Heart right ventricle (tissue), 16 donors: ENCODE measurements at regions of chr14 and their contacts with region 1.

Region 1: DNA sequence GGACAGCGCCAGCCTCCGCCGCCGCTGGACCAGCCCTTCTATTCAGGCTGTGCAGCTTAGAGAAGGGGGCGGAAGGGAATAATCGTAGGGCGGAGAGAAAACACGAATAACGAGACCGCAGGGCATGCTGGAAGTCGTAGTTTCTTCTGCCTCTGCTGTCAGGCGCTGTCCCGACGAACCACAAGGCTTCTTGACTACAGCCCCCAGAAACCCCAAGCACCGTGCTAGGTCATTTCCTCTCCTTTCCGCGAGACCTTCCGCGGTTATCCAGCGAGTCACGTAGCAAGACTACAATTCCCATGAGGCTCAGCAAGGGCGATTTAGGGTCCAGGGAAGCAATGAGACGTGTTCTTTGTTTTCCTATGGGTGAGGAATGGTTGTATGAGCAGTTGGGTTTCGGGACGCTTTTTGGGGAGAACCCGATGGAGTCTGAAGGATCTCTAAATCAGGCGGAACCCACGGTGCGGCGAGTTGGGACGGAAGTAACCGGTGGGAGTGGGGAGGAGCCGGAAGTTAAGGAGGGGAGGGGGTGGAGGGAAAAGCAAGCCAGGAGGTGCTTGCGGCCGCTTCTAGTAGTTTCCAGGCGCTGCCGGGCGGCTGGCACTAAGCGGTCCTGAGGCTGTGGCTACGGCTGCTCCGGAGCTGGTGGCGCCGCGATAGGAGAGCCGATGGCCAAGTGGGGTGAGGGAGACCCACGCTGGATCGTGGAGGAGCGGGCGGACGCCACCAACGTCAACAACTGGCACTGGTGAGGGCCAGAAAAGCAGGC is at the starts of genes AHSA1 and VIPAS39:
- DNase-seq: peak; percentile 87 to 98
- ATAC-seq: peak; percentile 98 to 99 (median 99)
- H3K4me3 ChIP-seq: peak within 1 kb of the TSS; percentile 75 to 99 (median 95)
- H3K27ac ChIP-seq: peak within 1 kb of the TSS; percentile 77 to 96 (median 90)
- H3K4me1 ChIP-seq: peaks cover 5 to 36% (median 26%) of the 10 kb centered on the region in 9 donors
- H3K27me3 ChIP-seq: no peaks in the 10 kb centered on the region
- CTCF ChIP-seq: no peak
- total RNA-seq, gene AHSA1: 107 to 193 (median 166) TPM
- total RNA-seq, gene VIPAS39: 8.1 to 18.7 (median 14.7) TPM

Region 2: DNA sequence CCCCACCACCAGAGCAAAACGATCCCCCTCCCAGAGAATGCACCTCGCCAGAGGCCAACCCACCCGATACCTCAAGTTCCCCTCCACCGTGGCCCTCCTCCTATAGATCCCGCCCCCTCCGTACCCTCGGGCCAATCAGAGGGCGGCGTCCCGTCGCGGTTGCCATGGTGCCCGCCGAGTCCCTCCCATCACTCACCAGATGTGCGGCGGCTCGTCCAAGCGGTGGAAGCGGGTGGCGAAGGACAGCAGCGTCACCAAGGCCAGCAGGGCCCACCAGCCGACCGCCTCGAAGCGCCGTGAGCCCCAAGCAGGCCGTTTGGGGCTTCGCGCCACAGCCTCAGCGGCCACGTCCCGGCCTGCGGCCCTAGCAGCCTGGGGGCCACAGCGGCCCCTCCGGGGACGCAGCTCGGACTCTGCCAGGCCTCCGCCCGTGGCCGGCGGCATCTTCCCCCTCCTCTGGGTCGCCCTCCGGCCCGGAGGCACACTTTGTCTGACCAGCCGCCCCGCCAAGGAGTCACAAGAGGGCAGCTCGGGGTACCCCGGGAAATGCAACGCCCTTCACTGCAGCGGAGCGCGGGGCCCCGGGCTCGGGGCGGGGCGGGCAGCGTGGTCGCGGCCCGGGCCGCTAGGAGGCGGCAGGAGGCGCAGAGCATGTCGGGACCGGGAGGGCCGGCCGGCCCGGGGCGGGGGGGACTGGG is 137.3 kb before region 1 on chr14 and contains the start of gene POMT2:
- intact Hi-C with region 1: loop called in 6 of 10 experiments (anchors 2 to 10 kb)
- DNase-seq: peak; percentile 93 to 95
- ATAC-seq: peak; percentile 74 to 87 (median 82)
- H3K4me3 ChIP-seq: peak within 1 kb of the TSS; percentile 76 to 100 (median 95)
- H3K27ac ChIP-seq: peak within 1 kb of the TSS; percentile 69 to 99 (median 99)
- H3K4me1 ChIP-seq: peaks cover 0 to 45% (median 25%) of the 10 kb centered on the region in 9 donors
- H3K27me3 ChIP-seq: no peaks in the 10 kb centered on the region
- CTCF ChIP-seq: peak; percentile 17 to 70 (median 48)
- total RNA-seq, gene POMT2: 10.5 to 23.4 (median 17.6) TPM

Region 3: GRCh38 chr14:77376771-77377501 is 80.8 kb before region 1 on chr14 and contains the starts of genes SAMD15 and TMED8:
- intact Hi-C with region 1: loop called in 1 of 10 experiments (anchors 2 kb)
- DNase-seq: peak; percentile 84 to 88
- ATAC-seq: peak; percentile 97 to 99 (median 98)
- H3K4me3 ChIP-seq: peak within 1 kb of the TSS; percentile 56 to 94 (median 86)
- H3K27ac ChIP-seq: peak within 1 kb of the TSS; percentile 16 to 92 (median 84)
- H3K4me1 ChIP-seq: peaks cover 0 to 28% (median 18%) of the 10 kb centered on the region in 9 donors
- H3K27me3 ChIP-seq: no peaks in the 10 kb centered on the region
- CTCF ChIP-seq: peak in 5 of 9 donors; percentile 35 to 60 (median 46)
- total RNA-seq, gene SAMD15: 0.15 to 0.30 (median 0.21) TPM in 9 of 10 donors, not detected in the other
- total RNA-seq, gene TMED8: 4.4 to 8.7 (median 7.1) TPM

Region 4: GRCh38 chr14:77542421-77543239 is 84.9 kb after region 1 on chr14:
- intact Hi-C with region 1: loop called in 3 of 10 experiments (anchors 10 kb)
- DNase-seq: no peak
- ATAC-seq: peak in 7 of 8 donors; percentile 49 to 72 (median 67)
- H3K4me3 ChIP-seq: no peak overlapping the region
- H3K27ac ChIP-seq: peak overlapping the region in 7 of 10 donors; percentile 27 to 73 (median 46)
- H3K4me1 ChIP-seq: peaks cover 0 to 34% (median 15%) of the 10 kb centered on the region in 9 donors
- H3K27me3 ChIP-seq: no peaks in the 10 kb centered on the region
- CTCF ChIP-seq: no peak

Region 5: GRCh38 chr14:77554207-77554606 is 96.5 kb after region 1 on chr14:
- intact Hi-C with region 1: loop called in 8 of 10 experiments (anchors 2 to 10 kb)
- DNase-seq: no peak
- ATAC-seq: peak in 2 of 8 donors; percentile 44 to 46
- H3K4me3 ChIP-seq: peak overlapping the region in 1 of 10 donors; percentile 0
- H3K27ac ChIP-seq: peak overlapping the region in 7 of 10 donors; percentile 7 to 68 (median 48)
- H3K4me1 ChIP-seq: peaks cover 0 to 41% (median 11%) of the 10 kb centered on the region in 9 donors
- H3K27me3 ChIP-seq: no peaks in the 10 kb centered on the region
- CTCF ChIP-seq: no peak

Region 6: DNA sequence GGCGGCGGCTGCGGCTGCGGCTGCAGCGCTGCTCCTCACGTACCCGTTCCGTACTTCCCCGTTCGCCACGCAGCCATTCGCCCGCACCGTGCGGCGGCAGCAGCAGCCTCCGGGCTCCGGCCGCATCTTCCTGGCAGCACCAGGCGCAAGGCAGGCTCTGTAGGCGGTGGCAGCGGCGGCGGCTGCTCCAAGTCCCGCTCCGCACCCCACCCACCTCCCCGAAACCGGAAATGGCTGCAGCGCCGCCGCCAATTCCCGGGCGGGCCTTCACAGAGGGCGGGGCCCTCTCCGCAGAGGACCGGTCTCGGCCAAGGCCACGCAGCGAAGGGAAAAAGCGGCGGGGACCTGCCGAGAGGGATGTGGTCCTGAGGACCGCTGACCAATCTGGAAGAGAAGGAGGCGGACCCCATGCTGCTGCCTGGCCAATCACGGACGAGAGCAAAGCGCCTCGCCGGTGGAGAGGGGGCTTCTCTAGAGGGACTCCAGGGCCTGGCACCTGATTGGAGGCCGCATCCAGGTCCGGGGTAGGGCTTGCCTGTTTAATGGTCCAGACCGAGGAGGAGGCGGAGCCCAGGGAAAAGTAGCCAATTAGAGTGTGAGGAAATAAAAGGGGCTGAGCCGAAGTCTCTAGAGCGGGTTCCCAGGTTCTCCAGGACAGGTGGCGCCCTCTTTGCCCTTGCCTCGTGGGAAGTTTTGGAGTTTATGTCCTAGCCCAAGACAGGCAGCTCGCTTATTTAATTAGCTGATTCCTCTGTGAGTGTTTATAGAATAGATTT is 158.9 kb after region 1 on chr14 and contains the start of gene SPTLC2:
- intact Hi-C with region 1: loop called in 3 of 10 experiments (anchors 5 to 10 kb)
- DNase-seq: peak; percentile 97 to 99
- ATAC-seq: peak; percentile 98 to 99 (median 99)
- H3K4me3 ChIP-seq: peak within 1 kb of the TSS; percentile 75 to 98 (median 86)
- H3K27ac ChIP-seq: peak within 1 kb of the TSS; percentile 76 to 94 (median 87)
- H3K4me1 ChIP-seq: peaks cover 3 to 48% (median 17%) of the 10 kb centered on the region in 9 donors
- H3K27me3 ChIP-seq: no peaks in the 10 kb centered on the region
- CTCF ChIP-seq: peak in 3 of 9 donors; percentile 28 to 45 (median 39)
- total RNA-seq, gene SPTLC2: 8.3 to 23.5 (median 13.3) TPM

Region 7: GRCh38 chr14:77707724-77708408 is 250.2 kb after region 1 on chr14 and contains the starts of genes ALKBH1 and SLIRP:
- intact Hi-C with region 1: loop called in 6 of 10 experiments (anchors 10 kb)
- DNase-seq: peak; percentile 84 to 91
- ATAC-seq: peak; percentile 95 to 99 (median 98)
- H3K4me3 ChIP-seq: peak within 1 kb of the TSS; percentile 70 to 99 (median 92)
- H3K27ac ChIP-seq: peak within 1 kb of the TSS in 9 of 10 donors; percentile 41 to 86 (median 74)
- H3K4me1 ChIP-seq: peaks cover 3 to 41% (median 30%) of the 10 kb centered on the region in 9 donors
- H3K27me3 ChIP-seq: no peaks in the 10 kb centered on the region
- CTCF ChIP-seq: no peak
- total RNA-seq, gene ALKBH1: 8.5 to 12.9 (median 11.6) TPM
- total RNA-seq, gene SLIRP: 132 to 231 (median 157) TPM